ENCODE measurements at regions of chr14 and their contacts with region 1.

Region 1: GRCh38 chr14:32252030-32252670 is 49.1 kb upstream of the RNU6-8 start:
- DNase-seq: peak; percentile 43 to 89
- H3K4me3 ChIP-seq: no peak overlapping the region
- H3K27ac ChIP-seq: peak overlapping the region in 2 of 5 donors; percentile 29 to 35
- H3K4me1 ChIP-seq: peaks cover 0 to 10% (median 4%) of the 10 kb centered on the region in 4 donors
- H3K27me3 ChIP-seq: no peaks in the 10 kb centered on the region
- CTCF ChIP-seq: peak in 5 of 7 experiments; percentile 61 to 83 (median 74)
- EP300 ChIP-seq: no peak
- POLR2A ChIP-seq: no peak

Region 2: GRCh38 chr14:31510222-31510621 is 741.9 kb before region 1 on chr14:
- intact Hi-C with region 1: loop called (anchors 10 kb)
- DNase-seq: peak in 1 of 2 donors; percentile 26
- H3K4me3 ChIP-seq: no peak overlapping the region
- H3K27ac ChIP-seq: no peak overlapping the region
- H3K4me1 ChIP-seq: peaks cover 0 to 5% (median 0%) of the 10 kb centered on the region in 4 donors
- H3K27me3 ChIP-seq: no peaks in the 10 kb centered on the region
- CTCF ChIP-seq: peak in 3 of 7 experiments; percentile 42 to 95 (median 66)
- EP300 ChIP-seq: no peak
- POLR2A ChIP-seq: no peak

Region 3: DNA sequence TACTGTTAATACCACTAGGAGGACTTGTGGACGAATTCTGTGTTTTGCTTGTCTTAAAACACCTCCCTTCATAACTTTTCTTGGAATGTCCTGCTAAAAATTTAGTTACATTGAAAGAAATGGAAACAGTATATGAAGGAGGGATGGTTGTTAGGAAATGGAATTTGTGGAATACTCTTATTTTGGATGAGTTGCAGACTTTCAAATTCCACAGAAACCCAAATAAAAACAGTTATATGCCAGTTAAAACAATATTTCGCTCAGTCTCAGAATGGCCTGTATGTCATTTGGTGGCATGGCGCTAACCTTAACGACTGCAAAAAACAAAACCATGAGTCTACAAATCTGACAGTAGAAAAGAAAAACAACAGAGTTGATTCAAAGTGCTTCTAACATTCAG is 187.2 kb before region 1 on chr14:
- intact Hi-C with region 1: loop called (anchors 5 kb)
- DNase-seq: no peak
- H3K4me3 ChIP-seq: no peak overlapping the region
- H3K27ac ChIP-seq: no peak overlapping the region
- H3K4me1 ChIP-seq: no peaks in the 10 kb centered on the region
- H3K27me3 ChIP-seq: peaks cover 0 to 5% (median 0%) of the 10 kb centered on the region in 3 donors
- CTCF ChIP-seq: no peak
- EP300 ChIP-seq: no peak
- POLR2A ChIP-seq: no peak

Region 4: DNA sequence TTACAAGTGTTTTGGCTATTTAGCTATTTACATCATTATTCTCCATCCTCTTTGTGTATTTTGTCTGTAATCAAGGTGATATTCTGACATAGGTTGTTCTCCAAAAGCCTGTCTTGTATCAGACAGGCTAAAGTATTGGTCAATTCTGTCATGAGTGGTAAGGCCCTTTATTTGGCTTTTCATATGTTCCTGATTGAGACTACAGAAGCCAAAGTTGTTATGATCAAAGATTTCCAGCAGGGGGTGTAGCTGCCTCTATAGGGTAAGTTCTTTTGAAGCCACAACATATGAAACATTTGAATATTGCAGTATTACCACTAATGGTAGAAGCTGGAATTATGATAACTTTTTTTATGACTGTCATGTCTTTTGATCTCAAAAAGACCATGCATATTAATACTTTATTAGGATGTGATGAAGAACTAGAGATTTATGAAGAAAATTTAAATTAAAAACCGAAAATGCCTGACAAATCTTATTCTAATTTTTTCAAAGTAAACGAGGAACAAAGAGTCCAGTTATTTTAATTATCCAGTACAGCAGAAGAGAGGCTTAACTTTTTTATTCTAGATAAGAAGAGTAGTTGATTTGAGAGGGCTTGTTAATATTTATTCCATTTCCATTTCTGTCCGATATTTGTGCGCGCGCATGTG is 178.5 kb before region 1 on chr14:
- intact Hi-C with region 1: loop called (anchors 5 kb)
- DNase-seq: peak; percentile 49 to 91
- H3K4me3 ChIP-seq: no peak overlapping the region
- H3K27ac ChIP-seq: peak overlapping the region in 1 of 5 donors; percentile 100
- H3K4me1 ChIP-seq: peaks cover 0 to 27% (median 16%) of the 10 kb centered on the region in 4 donors
- H3K27me3 ChIP-seq: no peaks in the 10 kb centered on the region
- CTCF ChIP-seq: peak in 5 of 7 experiments; percentile 59 to 80 (median 68)
- EP300 ChIP-seq: no peak
- POLR2A ChIP-seq: no peak